ENCODE measurements at regions of chr17 and their contacts with region 1.

Region 1: DNA sequence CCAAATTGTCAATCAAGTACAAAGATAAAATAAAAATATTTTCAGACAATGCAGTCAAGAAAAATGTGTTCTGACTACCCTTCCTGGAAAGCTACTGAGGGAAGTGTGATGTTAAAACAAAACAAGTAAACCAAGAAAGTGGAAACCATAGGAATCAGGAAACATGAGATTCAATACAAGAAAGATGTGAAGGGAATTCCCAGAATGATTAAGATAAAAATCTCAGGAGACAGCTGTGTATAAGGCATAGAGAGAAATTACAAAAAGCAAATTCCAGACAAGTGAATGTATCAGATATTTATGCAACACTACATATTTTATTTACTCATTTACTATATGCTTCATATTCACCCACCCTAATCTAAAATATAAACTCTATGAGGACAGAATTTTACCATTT is 32.2 kb downstream of the TRIM37 start:
- DNase-seq: no peak
- ATAC-seq: no peak
- H3K4me3 ChIP-seq: no peak overlapping the region
- H3K4me3 Mint-ChIP-seq: no peak overlapping the region
- H3K27ac ChIP-seq: no peak overlapping the region
- H3K27ac Mint-ChIP-seq: no peak overlapping the region
- H3K4me1 ChIP-seq: no peaks in the 10 kb centered on the region
- H3K4me1 Mint-ChIP-seq: no peaks in the 10 kb centered on the region
- H3K27me3 ChIP-seq: no peaks in the 10 kb centered on the region
- H3K27me3 Mint-ChIP-seq: no peaks in the 10 kb centered on the region
- CTCF ChIP-seq: no peak

Region 2: GRCh38 chr17:59097876-59098275 is 23.4 kb after region 1 on chr17:
- CTCF ChIA-PET with region 1: no interaction called
- POLR2A ChIA-PET with region 1: interaction called, 3 read pairs
- intact Hi-C with region 1: loop called in 1 of 2 experiments (anchors 2 kb)
- DNase-seq: no peak
- ATAC-seq: no peak
- H3K4me3 ChIP-seq: no peak overlapping the region
- H3K4me3 Mint-ChIP-seq: no peak overlapping the region
- H3K27ac ChIP-seq: no peak overlapping the region
- H3K27ac Mint-ChIP-seq: no peak overlapping the region
- H3K4me1 ChIP-seq: no peaks in the 10 kb centered on the region
- H3K4me1 Mint-ChIP-seq: peaks cover 35% of the 10 kb centered on the region
- H3K27me3 ChIP-seq: no peaks in the 10 kb centered on the region
- H3K27me3 Mint-ChIP-seq: no peaks in the 10 kb centered on the region
- CTCF ChIP-seq: no peak